Caco-2 (cell line): ENCODE measurements at regions of chr20 and their contacts with region 1.

Region 1: GRCh38 chr20:46307139-46307998 is 929 bp downstream of the CDH22 start:
- DNase-seq: peak; percentile 76 to 85
- H3K4me3 ChIP-seq: peak overlapping the region; percentile 46
- H3K4me3 Mint-ChIP-seq: peak overlapping the region; percentile 45
- H3K27ac Mint-ChIP-seq: no peak overlapping the region
- H3K4me1 ChIP-seq: peaks cover 15% of the 10 kb centered on the region
- H3K4me1 Mint-ChIP-seq: peaks cover 15% of the 10 kb centered on the region
- H3K27me3 ChIP-seq: peaks cover 22% of the 10 kb centered on the region
- H3K27me3 Mint-ChIP-seq: peaks cover 50% of the 10 kb centered on the region
- CTCF ChIP-seq: peak; percentile 97 to 99

Region 2: GRCh38 chr20:44738813-44739477 is 1568.4 kb before region 1 on chr20:
- CTCF ChIA-PET with region 1: interaction called, 10 read pairs
- POLR2A ChIA-PET with region 1: no interaction called
- intact Hi-C with region 1: no loop called
- DNase-seq: peak; percentile 96 to 98
- H3K4me3 ChIP-seq: no peak overlapping the region
- H3K4me3 Mint-ChIP-seq: peak overlapping the region; percentile 56
- H3K27ac Mint-ChIP-seq: no peak overlapping the region
- H3K4me1 ChIP-seq: peaks cover 12% of the 10 kb centered on the region
- H3K4me1 Mint-ChIP-seq: peaks cover 16% of the 10 kb centered on the region
- H3K27me3 ChIP-seq: no peaks in the 10 kb centered on the region
- H3K27me3 Mint-ChIP-seq: no peaks in the 10 kb centered on the region
- CTCF ChIP-seq: no peak

Region 3: DNA sequence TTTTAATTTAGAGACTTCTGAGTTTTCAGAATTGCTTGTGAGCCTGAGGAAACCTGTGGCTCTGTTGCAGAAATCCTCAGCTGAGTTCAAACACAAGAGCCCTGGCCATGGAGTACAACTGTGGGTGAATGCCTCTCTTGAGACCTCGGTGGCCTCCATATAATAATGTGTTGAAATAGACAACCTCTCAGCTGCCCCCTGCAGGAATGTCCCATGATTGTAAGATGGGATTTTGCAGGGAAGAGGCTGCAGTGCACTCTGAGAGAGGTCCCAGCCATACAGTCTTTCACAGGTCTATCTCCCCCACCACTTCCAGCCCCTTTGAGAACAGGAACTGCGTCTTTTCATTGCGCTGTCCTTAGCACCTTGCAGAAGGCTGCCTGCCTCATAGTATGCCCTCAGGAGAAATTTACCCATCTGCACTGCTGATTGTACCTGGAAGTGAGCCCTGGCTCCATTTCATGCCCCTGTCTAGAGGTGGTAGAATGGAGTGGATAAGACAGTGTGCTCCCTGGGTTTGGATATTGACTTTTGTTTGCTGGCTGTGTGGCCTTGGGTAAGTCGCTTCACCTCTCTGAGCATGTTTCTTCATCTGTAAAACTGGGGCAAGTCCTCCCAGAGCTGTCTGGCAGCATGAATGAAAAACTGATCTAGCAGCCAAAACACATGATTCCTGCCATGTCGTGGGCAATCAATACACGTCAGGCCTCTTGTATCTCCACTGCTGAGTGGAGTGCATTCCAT is 17.8 kb after region 1 on chr20:
- CTCF ChIA-PET with region 1: interaction called, 5 read pairs
- POLR2A ChIA-PET with region 1: no interaction called
- intact Hi-C with region 1: loop called (anchors 1 kb)
- DNase-seq: peak in 1 of 2 experiments; percentile 74
- H3K4me3 ChIP-seq: no peak overlapping the region
- H3K4me3 Mint-ChIP-seq: no peak overlapping the region
- H3K27ac Mint-ChIP-seq: no peak overlapping the region
- H3K4me1 ChIP-seq: no peaks in the 10 kb centered on the region
- H3K4me1 Mint-ChIP-seq: no peaks in the 10 kb centered on the region
- H3K27me3 ChIP-seq: peaks cover 3% of the 10 kb centered on the region; the same call in 1 of the 2 replicates
- H3K27me3 Mint-ChIP-seq: peaks cover 18% of the 10 kb centered on the region
- CTCF ChIP-seq: peak; percentile 61 to 71

Region 4: GRCh38 chr20:46363800-46364634 is 56.6 kb after region 1 on chr20:
- CTCF ChIA-PET with region 1: interaction called, 9 read pairs
- POLR2A ChIA-PET with region 1: interaction called, 4 read pairs
- intact Hi-C with region 1: loop called (anchors 5 kb)
- DNase-seq: peak; percentile 97 to 98
- H3K4me3 ChIP-seq: peak overlapping the region; percentile 86
- H3K4me3 Mint-ChIP-seq: peak overlapping the region; percentile 88
- H3K27ac Mint-ChIP-seq: peak overlapping the region; percentile 83
- H3K4me1 ChIP-seq: peaks cover 11% of the 10 kb centered on the region
- H3K4me1 Mint-ChIP-seq: peaks cover 14% of the 10 kb centered on the region
- H3K27me3 ChIP-seq: no peaks in the 10 kb centered on the region
- H3K27me3 Mint-ChIP-seq: no peaks in the 10 kb centered on the region
- CTCF ChIP-seq: no peak

Region 5: DNA sequence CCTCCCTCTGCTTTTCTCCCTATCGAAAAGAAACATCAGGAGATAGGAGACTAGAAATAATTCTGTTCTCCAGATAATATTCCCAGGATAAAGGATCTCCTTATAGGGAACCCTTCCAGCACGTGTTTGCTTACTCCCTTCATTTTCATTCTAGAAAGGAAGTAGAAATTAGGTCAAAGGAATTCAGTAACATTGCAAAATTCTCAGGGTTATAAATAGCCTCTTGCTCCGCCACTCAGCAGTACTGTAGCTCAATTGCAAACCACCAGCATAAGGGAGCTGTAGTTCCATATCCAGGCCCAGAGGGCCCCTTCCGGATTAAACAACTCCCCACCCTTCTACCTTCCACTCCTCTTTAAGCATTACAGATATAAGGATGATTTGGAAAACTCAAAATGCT is 92.9 kb after region 1 on chr20:
- CTCF ChIA-PET with region 1: no interaction called
- POLR2A ChIA-PET with region 1: no interaction called
- intact Hi-C with region 1: no loop called
- DNase-seq: no peak
- H3K4me3 ChIP-seq: no peak overlapping the region
- H3K4me3 Mint-ChIP-seq: no peak overlapping the region
- H3K27ac Mint-ChIP-seq: no peak overlapping the region
- H3K4me1 ChIP-seq: peaks cover 4% of the 10 kb centered on the region; the same call in 1 of the 2 replicates
- H3K4me1 Mint-ChIP-seq: peaks cover 5% of the 10 kb centered on the region
- H3K27me3 ChIP-seq: no peaks in the 10 kb centered on the region
- H3K27me3 Mint-ChIP-seq: no peaks in the 10 kb centered on the region
- CTCF ChIP-seq: no peak

Region 6: DNA sequence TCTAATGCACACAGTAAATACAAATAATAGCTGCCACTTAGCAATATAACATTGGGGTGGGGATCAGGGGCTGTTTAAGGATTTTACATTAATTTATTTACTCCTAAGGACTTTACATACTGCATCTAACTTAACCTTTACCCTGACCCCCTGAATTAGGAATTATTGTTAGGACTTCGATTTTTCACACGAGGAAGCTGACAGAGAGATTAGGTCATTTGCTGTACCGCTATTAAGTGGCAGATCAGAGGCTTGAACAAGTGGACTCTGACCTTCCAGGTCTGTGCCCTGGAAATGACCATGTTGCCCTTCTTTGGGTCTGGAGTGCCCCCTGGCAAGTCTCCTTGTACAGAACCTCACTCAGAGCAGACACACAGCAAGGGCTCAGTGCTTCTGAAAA is 104.3 kb after region 1 on chr20:
- CTCF ChIA-PET with region 1: interaction called, 23 read pairs
- POLR2A ChIA-PET with region 1: no interaction called
- intact Hi-C with region 1: loop called (anchors 1 kb)
- DNase-seq: no peak
- H3K4me3 ChIP-seq: no peak overlapping the region
- H3K4me3 Mint-ChIP-seq: no peak overlapping the region
- H3K27ac Mint-ChIP-seq: no peak overlapping the region
- H3K4me1 ChIP-seq: peaks cover 14% of the 10 kb centered on the region; the same call in 1 of the 2 replicates
- H3K4me1 Mint-ChIP-seq: no peaks in the 10 kb centered on the region
- H3K27me3 ChIP-seq: no peaks in the 10 kb centered on the region; the same call in 1 of the 2 replicates
- H3K27me3 Mint-ChIP-seq: peaks cover 18% of the 10 kb centered on the region
- CTCF ChIP-seq: no peak